IMR-90 (cell line): ENCODE measurements at regions of chr9 and their contacts with region 1.

Region 1: DNA sequence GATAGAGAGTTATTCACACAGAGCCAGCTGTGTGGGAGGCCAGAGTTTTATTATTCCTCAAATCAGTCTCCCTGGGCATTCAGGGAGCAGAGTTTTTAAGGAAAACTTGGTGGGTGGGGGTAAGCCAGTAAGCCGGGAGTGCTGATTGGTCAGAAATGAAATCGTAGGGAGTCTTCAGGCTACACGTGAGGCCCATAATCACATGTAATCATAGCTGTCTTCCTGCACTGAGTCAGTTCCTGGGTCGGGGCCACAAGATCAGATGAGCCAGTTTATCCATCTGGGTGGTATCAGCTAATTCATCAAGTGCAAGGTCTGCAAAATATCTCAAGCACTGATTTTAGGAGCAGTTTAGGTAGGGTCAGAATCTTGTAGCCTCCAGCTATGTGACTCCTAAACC is 10.8 kb upstream of the TTC39B start:
- DNase-seq: peak; percentile 49
- ATAC-seq: peak; percentile 42; the same call in 1 of the 2 replicates
- H3K4me3 ChIP-seq: no peak overlapping the region
- H3K27ac ChIP-seq: no peak overlapping the region
- H3K4me1 ChIP-seq: peaks cover 2% of the 10 kb centered on the region; the same call in 1 of the 2 replicates
- H3K27me3 ChIP-seq: no peaks in the 10 kb centered on the region
- CTCF ChIP-seq: no peak
- POLR2A ChIP-seq: no peak
- RAD21 ChIP-seq: no peak

Region 2: GRCh38 chr9:15370466-15371447 is 52.9 kb after region 1 on chr9:
- CTCF ChIA-PET with region 1: interaction called, 3 read pairs
- POLR2A ChIA-PET with region 1: interaction called, 10 read pairs
- dilution Hi-C with region 1: no loop called
- in situ Hi-C with region 1: no loop called
- intact Hi-C with region 1: no loop called
- DNase-seq: no peak
- ATAC-seq: no peak
- H3K4me3 ChIP-seq: no peak overlapping the region
- H3K27ac ChIP-seq: peak overlapping the region; percentile 7; the same call in 1 of the 2 replicates
- H3K4me1 ChIP-seq: peaks cover 13% of the 10 kb centered on the region
- H3K27me3 ChIP-seq: no peaks in the 10 kb centered on the region
- CTCF ChIP-seq: no peak
- POLR2A ChIP-seq: no peak
- RAD21 ChIP-seq: no peak